ENCODE measurements at regions of chr16 and their contacts with region 1.

Region 1: GRCh38 chr16:56294579-56294978 is 103.3 kb downstream of the GNAO1 start:
- DNase-seq: no peak

Region 2: DNA sequence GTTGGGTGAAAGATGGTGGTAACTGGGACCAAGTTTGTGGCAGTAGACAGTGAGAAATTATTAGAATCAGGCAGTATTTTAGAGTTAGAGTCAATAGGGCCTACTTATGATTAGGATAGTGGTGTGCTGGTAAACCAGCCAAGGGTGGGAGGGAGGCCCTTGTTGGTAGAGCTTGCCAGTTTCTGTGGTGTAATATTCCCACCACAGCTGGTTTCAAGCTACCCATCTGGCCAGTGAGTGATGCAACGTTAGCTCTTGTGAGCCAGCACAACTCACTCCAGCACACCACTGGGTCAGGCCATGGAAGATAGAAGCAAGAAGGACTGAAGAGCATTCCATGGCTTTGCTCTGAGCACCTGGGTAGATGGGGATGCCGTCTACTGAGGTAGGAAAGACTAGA is 68.4 kb before region 1 on chr16:
- intact Hi-C with region 1: no loop called
- DNase-seq: no peak

Region 3: GRCh38 chr16:56257239-56257638 is 37.3 kb before region 1 on chr16:
- intact Hi-C with region 1: loop called (anchors 5 kb)
- DNase-seq: no peak

Region 4: DNA sequence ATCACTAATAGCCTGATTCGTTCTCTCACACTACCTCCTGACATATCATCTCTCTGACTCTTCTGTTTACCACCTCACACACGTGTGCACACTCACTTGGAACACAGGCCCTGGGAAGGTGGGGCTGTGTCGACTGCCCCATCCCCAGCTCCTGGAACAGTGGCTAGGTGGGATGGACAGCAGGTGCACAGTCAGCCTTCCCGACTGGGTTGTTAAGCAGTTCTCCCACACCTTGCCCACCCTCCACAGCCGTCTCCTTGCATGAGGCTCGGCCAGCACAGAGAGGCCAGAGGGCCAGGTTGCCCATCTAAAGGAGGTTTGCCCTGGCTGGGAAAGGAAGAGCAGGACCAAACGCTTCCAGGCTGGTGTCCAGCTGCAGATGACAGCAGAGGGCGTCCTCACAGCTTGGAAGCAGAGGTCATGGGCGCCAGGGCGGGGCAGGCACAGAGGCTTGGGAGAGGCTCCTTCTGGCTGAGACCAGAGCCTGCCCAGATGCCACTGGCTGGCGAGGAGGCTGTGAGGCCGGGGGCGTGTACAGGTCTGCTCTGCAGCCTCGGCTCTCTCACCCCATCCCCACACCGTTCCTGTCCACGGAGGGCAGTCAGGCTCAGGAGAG is 38.0 kb after region 1 on chr16:
- intact Hi-C with region 1: no loop called
- DNase-seq: peak; percentile 81

Measured in cardiac septum (tissue), 1 donor.